ENCODE measurements at regions of chr7 and their contacts with region 1.

Region 1: DNA sequence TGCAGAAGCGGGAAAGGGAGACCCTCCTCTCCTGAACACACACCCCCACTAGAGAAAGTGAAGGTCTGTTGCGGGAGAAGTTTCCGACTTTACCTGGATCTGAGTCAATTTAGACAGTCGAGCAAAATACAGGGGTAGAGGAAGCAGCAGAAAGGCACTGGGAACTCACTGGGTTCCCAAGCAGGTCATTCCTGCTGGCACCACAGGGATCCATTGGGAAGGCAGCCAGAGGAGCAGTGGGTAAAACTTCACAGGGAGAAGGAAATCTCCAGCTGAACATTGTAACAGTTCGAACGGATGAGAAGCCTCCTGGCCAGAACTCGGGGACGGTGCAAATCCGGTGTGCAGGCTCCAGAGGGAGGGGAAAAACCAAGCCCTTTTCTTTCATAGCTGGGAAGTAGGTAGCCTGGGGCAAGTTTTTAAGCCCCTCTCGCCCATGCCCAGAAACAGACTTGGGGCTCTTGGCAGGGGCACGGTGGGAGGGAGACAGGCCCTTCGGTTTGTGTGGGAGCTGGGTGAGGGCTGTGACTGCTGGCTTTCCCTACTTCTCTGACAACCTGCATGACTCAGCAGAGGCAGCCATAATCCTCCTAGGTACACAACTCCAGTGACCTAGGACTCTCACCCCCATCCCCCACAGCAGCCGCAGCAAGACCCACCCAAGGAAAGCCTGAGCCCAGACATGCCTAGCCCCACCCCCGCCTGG is 51.9 kb downstream of the DDC start:
- DNase-seq: no peak
- H3K4me3 Mint-ChIP-seq: no peak overlapping the region
- H3K27ac Mint-ChIP-seq: no peak overlapping the region
- H3K4me1 Mint-ChIP-seq: no peaks in the 10 kb centered on the region
- H3K27me3 Mint-ChIP-seq: peaks cover 10% of the 10 kb centered on the region

Region 2: GRCh38 chr7:50531928-50532327 is 18.6 kb after region 1 on chr7:
- intact Hi-C with region 1: loop called (anchors 1 kb)
- DNase-seq: no peak
- H3K4me3 Mint-ChIP-seq: no peak overlapping the region
- H3K27ac Mint-ChIP-seq: no peak overlapping the region
- H3K4me1 Mint-ChIP-seq: peaks cover 17% of the 10 kb centered on the region
- H3K27me3 Mint-ChIP-seq: peaks cover 13% of the 10 kb centered on the region